ENCODE measurements at regions of chr2 and their contacts with region 1.

Region 1: DNA sequence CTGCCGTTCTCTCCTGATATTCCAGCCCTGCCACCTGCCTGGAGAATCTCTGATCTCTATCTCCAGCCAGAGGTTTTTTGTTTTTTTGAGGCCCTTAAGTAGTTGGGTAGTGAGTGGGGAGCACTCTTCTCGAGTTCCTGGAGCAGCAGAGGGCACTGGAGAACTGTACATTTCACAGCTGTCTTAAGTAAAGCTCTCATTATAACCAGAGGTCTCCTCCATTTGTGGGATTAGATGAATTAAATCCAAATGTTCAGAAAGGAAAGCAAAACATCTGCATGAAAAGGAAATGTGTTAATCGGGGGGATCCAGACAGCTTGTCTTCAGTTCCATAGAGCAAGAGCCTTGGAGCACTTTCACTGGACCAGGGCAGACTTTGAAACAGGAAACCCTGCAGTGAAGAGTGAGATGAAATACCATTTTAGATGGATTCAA is 32.8 kb downstream of the AOX1 start:
- DNase-seq: peak in 2 of 4 experiments; percentile 23 to 30
- ATAC-seq: peak; percentile 84
- H3K4me3 ChIP-seq: no peak overlapping the region
- H3K27ac ChIP-seq: no peak overlapping the region
- H3K4me1 ChIP-seq: peaks cover 0 to 5% of the 10 kb centered on the region in 2 experiments; a peak in 2 of 5 replicates
- H3K27me3 ChIP-seq: peaks cover 0 to 4% of the 10 kb centered on the region in 2 experiments; a peak in 1 of 5 replicates
- CTCF ChIP-seq: peak; percentile 25 to 45 (median 30); a peak in 3 of 6 replicates
- EP300 ChIP-seq: no peak
- POLR2A ChIP-seq: no peak
- RAD21 ChIP-seq: peak; percentile 50 to 70; a peak in 3 of 4 replicates

Region 2: GRCh38 chr2:200483729-200484198 is 134.8 kb before region 1 on chr2:
- CTCF ChIA-PET with region 1: no interaction called
- POLR2A ChIA-PET with region 1: no interaction called
- in situ Hi-C with region 1: no loop called
- intact Hi-C with region 1: loop called (anchors 10 kb)
- DNase-seq: peak; percentile 15 to 63 (median 28)
- ATAC-seq: peak; percentile 94
- H3K4me3 ChIP-seq: no peak overlapping the region
- H3K27ac ChIP-seq: no peak overlapping the region
- H3K4me1 ChIP-seq: peaks cover 6 to 9% of the 10 kb centered on the region in 2 experiments; a peak in 4 of 5 replicates
- H3K27me3 ChIP-seq: no peaks in the 10 kb centered on the region
- CTCF ChIP-seq: peak; percentile 65 to 76 (median 71)
- EP300 ChIP-seq: no peak
- POLR2A ChIP-seq: no peak
- RAD21 ChIP-seq: peak; percentile 27 to 70; a peak in 3 of 4 replicates

Region 3: DNA sequence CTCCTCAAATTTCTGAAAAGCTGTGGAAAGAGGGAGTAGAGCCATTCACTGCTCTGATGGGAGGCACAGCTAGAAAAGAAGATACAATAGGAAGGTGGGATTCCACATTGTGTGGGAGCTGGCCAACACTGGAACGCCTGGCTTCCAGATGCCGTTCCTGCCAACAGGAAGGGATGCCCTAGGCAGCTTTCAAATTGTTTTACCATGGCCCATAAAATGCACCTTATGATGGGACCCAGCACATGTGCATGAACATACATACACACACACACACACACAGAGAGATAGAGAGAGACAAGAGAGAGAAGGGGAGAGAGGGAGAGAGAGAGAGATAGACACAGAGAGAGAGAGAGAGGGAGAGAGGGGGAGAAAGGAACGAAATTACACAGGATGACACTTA is 107.0 kb after region 1 on chr2:
- CTCF ChIA-PET with region 1: no interaction called
- POLR2A ChIA-PET with region 1: no interaction called
- in situ Hi-C with region 1: no loop called
- intact Hi-C with region 1: no loop called
- DNase-seq: no peak
- ATAC-seq: no peak
- H3K4me3 ChIP-seq: no peak overlapping the region
- H3K27ac ChIP-seq: no peak overlapping the region
- H3K4me1 ChIP-seq: no peaks in the 10 kb centered on the region
- H3K27me3 ChIP-seq: peaks cover 12 to 24% of the 10 kb centered on the region in 2 experiments
- CTCF ChIP-seq: no peak
- EP300 ChIP-seq: no peak
- POLR2A ChIP-seq: no peak
- RAD21 ChIP-seq: no peak

Measured in K562 (cell line).